ENCODE measurements at regions of chr1 and their contacts with region 1.

Region 1: GRCh38 chr1:15741183-15741850 is 982 bp upstream of the TMEM82 start:
- DNase-seq: peak; percentile 80 to 82
- H3K4me3 ChIP-seq: no peak overlapping the region
- H3K27ac ChIP-seq: no peak overlapping the region
- H3K4me1 ChIP-seq: no peaks in the 10 kb centered on the region
- H3K27me3 ChIP-seq: no peaks in the 10 kb centered on the region
- CTCF ChIP-seq: peak; percentile 75 to 90 (median 85)
- POLR2A ChIP-seq: no peak

Region 2: DNA sequence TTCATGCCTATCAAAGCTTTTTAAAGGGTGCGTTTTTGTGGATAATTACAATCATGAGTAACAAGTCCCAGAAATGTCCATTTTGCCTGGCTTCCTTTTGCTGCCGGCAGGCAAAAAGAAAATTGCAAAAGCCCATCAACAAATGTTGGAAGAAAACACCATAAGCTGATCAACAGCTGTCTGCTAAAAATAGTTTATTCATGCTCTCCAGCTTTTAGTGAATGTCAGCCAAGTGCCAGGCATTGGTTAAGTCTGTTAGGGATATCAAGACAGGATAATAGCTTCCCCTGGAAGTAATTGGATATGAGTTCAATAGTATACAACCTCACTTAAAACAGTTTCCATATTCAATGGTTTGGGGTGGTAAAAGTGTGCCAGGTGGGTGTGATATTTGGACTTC is 142.9 kb before region 1 on chr1:
- intact Hi-C with region 1: loop called (anchors 10 kb)
- DNase-seq: no peak
- H3K4me3 ChIP-seq: no peak overlapping the region
- H3K27ac ChIP-seq: no peak overlapping the region
- H3K4me1 ChIP-seq: no peaks in the 10 kb centered on the region
- H3K27me3 ChIP-seq: no peaks in the 10 kb centered on the region
- CTCF ChIP-seq: no peak
- POLR2A ChIP-seq: no peak